Activated CD4-positive, alpha-beta T cell treated with anti-CD3 and anti-CD28 coated beads for 36 hours (primary cell): ENCODE measurements at regions of chr4 and their contacts with region 1.

Region 1: DNA sequence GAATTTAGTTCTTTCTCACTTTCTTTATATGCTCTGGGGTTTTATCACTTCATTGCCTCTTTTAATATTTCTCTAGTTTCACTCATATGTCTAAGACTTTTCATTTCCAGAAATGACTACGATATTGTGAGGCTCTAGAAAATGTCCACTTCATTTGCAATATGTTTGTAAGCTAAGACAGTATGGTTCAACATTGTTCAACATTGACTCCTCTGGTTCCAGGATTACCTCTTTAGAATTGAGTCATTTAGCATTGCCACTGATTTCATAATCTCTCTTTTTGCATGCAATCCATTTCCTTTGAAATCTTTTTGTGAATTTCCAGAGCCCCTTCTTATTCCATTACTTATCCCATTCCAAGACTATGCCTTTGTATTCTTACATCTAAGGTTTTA is 32.3 kb downstream of the BBS12 start:
- DNase-seq: no peak
- ATAC-seq: peak; percentile 93
- H3K4me3 Mint-ChIP-seq: no peak overlapping the region
- H3K27ac Mint-ChIP-seq: no peak overlapping the region
- H3K4me1 Mint-ChIP-seq: peaks cover 27% of the 10 kb centered on the region
- H3K27me3 Mint-ChIP-seq: peaks cover 2% of the 10 kb centered on the region

Region 2: DNA sequence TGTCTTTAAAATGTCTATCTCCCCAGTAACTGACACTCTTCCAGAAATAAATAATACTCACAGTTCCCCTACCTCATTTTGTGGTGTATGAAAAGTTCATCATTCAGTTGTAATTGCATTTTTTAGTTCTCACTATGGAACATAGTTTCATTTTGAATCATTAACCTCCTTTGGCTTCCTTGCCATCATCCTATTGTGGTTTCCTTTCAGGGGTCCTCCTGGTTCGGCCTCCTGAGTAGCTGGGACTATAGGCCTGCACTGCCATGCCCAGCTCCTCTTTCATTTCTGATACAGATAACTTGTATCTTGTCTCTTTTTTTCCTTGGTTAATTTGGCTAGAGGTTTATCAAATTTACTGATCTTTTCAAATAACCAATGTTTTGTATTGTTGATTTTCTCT is 635.8 kb before region 1 on chr4:
- CTCF ChIA-PET with region 1: no interaction called
- POLR2A ChIA-PET with region 1: no interaction called
- intact Hi-C with region 1: no loop called
- DNase-seq: no peak
- ATAC-seq: no peak
- H3K4me3 Mint-ChIP-seq: no peak overlapping the region
- H3K27ac Mint-ChIP-seq: no peak overlapping the region
- H3K4me1 Mint-ChIP-seq: peaks cover 24% of the 10 kb centered on the region
- H3K27me3 Mint-ChIP-seq: peaks cover 1% of the 10 kb centered on the region

Region 3: GRCh38 chr4:122814426-122814825 is 49.6 kb after region 1 on chr4:
- CTCF ChIA-PET with region 1: no interaction called
- POLR2A ChIA-PET with region 1: no interaction called
- intact Hi-C with region 1: loop called (anchors 1 to 2 kb)
- DNase-seq: peak; percentile 19
- ATAC-seq: peak; percentile 99
- H3K4me3 Mint-ChIP-seq: no peak overlapping the region
- H3K27ac Mint-ChIP-seq: no peak overlapping the region
- H3K4me1 Mint-ChIP-seq: peaks cover 11% of the 10 kb centered on the region
- H3K27me3 Mint-ChIP-seq: peaks cover 16% of the 10 kb centered on the region

Region 4: DNA sequence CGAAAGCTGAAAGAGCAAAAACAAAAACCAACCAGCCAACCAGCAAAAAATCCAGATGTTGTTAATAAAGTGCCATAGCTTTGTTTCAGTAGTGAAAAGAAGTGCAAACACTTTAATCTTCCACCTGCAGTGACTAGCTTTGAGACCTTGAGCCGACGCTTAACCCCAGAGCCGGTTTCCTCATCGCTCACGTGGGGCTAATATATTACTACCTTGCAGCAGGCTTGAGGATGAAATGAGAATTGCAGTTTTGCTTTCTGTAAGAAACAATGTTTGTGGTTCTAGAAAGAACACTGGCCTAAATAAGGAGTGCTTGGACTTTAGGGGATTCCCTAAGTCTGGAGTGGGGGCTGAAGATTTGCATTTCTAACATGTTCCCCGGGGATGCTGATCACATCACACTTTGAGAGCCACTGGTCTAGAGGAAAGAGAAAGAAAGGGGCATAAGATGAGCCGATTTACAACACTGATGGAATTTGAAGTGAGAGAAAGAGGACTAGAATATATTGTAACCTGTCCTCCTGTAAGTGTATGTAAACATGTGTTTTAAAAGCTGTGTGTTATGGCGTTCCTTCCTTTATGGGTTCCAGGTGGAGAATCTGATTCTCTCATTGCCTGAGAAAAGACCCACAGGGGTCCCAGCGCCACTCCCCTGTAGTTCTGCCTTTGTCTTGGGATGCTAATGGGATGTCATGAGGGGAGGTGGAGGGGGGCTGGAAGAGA is 63.2 kb after region 1 on chr4:
- CTCF ChIA-PET with region 1: no interaction called
- POLR2A ChIA-PET with region 1: no interaction called
- intact Hi-C with region 1: loop called in 1 of 2 experiments (anchors 5 kb)
- DNase-seq: peak; percentile 70
- ATAC-seq: peak; percentile 89
- H3K4me3 Mint-ChIP-seq: peak overlapping the region; percentile 75
- H3K27ac Mint-ChIP-seq: peak overlapping the region; percentile 40
- H3K4me1 Mint-ChIP-seq: peaks cover 12% of the 10 kb centered on the region
- H3K27me3 Mint-ChIP-seq: peaks cover 70% of the 10 kb centered on the region

Region 5: GRCh38 chr4:123037804-123038203 is 273.0 kb after region 1 on chr4:
- CTCF ChIA-PET with region 1: no interaction called
- POLR2A ChIA-PET with region 1: no interaction called
- intact Hi-C with region 1: no loop called
- DNase-seq: no peak
- ATAC-seq: peak; percentile 23
- H3K4me3 Mint-ChIP-seq: no peak overlapping the region
- H3K27ac Mint-ChIP-seq: no peak overlapping the region
- H3K4me1 Mint-ChIP-seq: no peaks in the 10 kb centered on the region
- H3K27me3 Mint-ChIP-seq: no peaks in the 10 kb centered on the region